Cardiac septum (tissue), 1 donor: ENCODE measurements at regions of chr4 and their contacts with region 1.

Region 1: DNA sequence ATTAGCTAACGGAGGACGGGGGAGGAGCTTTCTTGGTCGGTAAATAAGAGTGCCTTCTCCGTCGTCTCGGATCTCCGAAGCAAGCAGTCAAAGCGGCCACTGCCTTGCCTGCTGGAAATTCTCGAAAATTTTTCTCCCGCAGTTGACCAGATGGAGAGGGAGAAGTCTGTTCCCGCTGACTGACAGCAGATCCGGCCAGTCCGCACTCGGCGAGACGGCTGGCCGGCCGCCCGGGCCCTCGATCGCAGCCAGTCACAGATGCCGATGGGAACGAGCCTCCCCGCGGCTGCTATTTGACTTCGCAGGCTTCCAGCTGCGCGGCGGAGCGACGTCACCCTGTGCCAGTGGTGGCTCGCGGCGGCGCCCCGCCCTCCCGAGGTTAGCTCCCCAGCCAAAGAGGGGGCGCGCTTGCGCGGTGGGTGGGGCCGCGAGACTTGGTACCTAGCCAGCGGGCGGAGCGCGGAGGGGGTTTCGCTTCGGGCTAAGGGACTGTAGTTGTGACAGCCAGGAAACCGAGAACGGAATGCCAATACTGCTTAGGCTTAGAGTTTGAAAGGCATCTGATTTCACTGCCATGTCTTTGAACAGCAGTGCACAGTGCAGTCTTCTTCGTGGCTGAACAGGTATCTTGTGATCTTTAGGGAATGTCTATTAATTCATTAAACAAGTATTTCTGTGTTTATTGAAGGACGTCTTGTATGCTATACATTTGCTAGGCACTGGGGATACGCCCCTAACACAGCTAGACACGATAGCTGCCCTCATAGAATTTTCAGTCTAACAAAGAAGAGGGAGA is at the start of gene PPM1K:
- DNase-seq: peak; percentile 100
- total RNA-seq, gene PPM1K: 210 TPM

Region 2: DNA sequence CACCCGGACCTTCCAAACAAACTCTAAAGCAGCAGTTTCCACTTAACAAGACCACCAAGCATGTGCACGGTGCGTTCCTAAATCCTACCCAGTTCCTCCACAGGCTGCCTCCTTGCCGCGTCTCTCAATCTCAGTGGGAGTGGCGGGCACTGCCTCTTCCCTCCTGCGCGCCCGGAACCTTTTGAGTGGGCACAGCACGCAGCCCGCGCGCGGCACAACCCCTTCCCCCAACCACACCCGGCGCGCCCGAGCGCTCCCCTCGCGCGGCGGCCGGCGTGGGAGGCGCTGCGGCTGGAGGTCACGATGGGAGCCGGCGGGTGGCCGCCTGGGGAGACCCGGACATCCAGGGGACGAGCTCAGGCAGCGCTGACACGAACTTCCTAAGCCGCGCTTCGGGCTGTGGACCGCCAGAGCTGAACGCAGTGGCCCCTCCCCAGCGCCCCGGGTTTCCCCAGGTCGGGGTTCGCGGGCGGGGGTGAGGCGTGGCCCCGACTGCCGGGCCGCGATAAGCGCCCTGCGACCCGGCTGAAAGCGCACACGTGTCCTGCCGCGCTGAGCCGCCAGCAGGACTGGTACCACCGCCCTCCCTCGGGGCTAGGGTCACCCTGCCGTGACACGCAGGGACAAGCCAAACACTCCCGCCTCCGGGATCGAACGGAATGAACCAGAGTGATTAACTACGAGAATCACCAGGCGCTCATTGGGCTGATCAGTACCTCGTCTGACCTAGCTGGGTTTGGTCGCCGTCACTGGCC is 126.0 kb before region 1 on chr4 and contains the start of gene ABCG2:
- intact Hi-C with region 1: no loop called
- DNase-seq: no peak
- total RNA-seq, gene ABCG2: 4.4 TPM

Region 3: GRCh38 chr4:88230969-88231771 is 53.5 kb before region 1 on chr4:
- intact Hi-C with region 1: loop called (anchors 5 kb)
- DNase-seq: no peak

Region 4: GRCh38 chr4:88378691-88379559 is 94.3 kb after region 1 on chr4 and contains the start of gene HERC6:
- intact Hi-C with region 1: loop called (anchors 2 kb)
- DNase-seq: peak; percentile 85
- total RNA-seq, gene HERC6: 10.0 TPM

Region 5: GRCh38 chr4:88523325-88524129 is 238.9 kb after region 1 on chr4 and contains the start of gene PYURF:
- intact Hi-C with region 1: loop called (anchors 5 kb)
- DNase-seq: peak; percentile 96
- total RNA-seq, gene PYURF: 50.8 TPM